Thyroid gland (tissue), 4 donors: ENCODE measurements at regions of chr21 and their contacts with region 1.

Region 1: DNA sequence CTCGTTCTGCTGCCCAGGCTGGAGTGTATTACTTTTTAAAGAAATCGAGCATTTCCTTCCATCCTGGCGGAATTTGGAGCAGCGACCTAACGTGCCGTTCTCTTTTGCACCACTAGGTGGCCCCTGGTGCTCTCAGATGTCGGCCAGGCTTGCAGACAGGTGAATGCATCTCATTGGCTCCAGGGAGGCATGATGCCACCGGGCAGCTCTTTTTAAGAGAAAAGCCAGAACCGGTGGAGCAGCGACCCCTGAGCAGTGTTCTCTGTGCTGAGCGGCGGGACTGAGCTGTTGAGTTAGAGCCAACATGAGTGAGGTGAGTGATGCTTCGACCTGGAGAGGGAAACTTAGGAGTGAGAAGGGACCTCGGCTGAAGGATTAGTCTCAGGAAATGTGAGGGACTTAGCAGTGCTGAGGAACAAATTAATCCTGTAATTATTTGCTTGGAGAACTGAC is at the start of gene PCP4:
- DNase-seq: peak; percentile 93 to 95
- H3K4me3 ChIP-seq: peak within 1 kb of the TSS in 2 of 3 donors; percentile 16 to 20
- H3K27ac ChIP-seq: peak within 1 kb of the TSS; percentile 96 to 99 (median 99)
- H3K4me1 ChIP-seq: peaks cover 43 to 44% of the 10 kb centered on the region in 2 donors
- H3K27me3 ChIP-seq: no peaks in the 10 kb centered on the region
- CTCF ChIP-seq: peak; percentile 69 to 99 (median 88)
- POLR2A ChIP-seq: peak; percentile 16 to 97
- total RNA-seq, gene PCP4: 67.9 to 318 (median 238) TPM

Region 2: GRCh38 chr21:39911286-39912199 is 44.3 kb after region 1 on chr21:
- intact Hi-C with region 1: loop called (anchors 5 kb)
- DNase-seq: peak; percentile 59 to 67
- H3K4me3 ChIP-seq: no peak overlapping the region
- H3K27ac ChIP-seq: peak overlapping the region in 1 of 3 donors; percentile 50
- H3K4me1 ChIP-seq: peaks cover 5 to 21% of the 10 kb centered on the region in 2 donors
- H3K27me3 ChIP-seq: no peaks in the 10 kb centered on the region
- CTCF ChIP-seq: peak in 4 of 6 experiments; percentile 59 to 74 (median 67)
- POLR2A ChIP-seq: no peak